ENCODE measurements at regions of chr5 and their contacts with region 1.

Region 1: DNA sequence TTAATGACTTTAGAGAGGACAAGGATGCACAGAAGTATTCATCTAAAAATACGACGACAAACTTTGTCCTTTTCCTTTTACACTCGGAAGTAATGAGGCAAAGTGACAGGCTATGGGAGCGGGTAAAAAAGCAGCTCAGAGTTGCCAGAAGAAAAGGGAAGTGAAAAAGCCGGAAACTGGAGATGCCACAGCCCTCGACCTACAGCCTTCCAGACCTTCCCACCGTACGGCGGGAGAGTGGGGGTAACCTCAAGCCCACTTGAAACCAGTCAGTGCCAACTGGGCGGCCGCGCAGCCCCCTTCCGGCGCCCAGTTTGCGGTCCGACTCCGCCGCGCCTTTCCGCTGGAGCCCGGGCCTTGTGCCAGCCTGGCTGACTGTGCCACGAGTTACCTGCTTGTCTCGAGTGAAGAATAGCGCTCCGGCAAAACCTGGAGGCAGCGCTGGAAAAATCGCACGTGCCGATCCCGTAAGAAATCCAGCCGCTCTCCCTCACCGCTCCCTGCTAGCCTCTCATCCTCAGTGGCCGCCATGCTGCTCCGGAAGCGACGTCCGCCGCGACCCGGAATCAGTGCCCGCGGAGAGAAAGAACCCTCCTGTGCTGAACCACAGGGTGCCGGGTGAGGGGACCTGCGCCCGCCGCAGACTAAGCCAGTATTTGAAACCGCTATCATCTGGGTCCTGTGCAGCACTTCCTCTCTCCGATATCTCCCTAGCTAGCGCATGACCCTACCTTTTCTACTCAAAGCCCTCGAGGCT is at the start of gene PGGT1B:
- DNase-seq: peak; percentile 91
- H3K4me3 Mint-ChIP-seq: peak within 1 kb of the TSS; percentile 96
- H3K27ac Mint-ChIP-seq: peak within 1 kb of the TSS; percentile 88
- H3K4me1 Mint-ChIP-seq: peaks cover 36% of the 10 kb centered on the region
- H3K27me3 Mint-ChIP-seq: no peaks in the 10 kb centered on the region
- total RNA-seq, gene PGGT1B: 37.9 and 42.0 TPM in 2 replicates

Region 2: GRCh38 chr5:114243281-114243988 is 1019.1 kb before region 1 on chr5:
- intact Hi-C with region 1: no loop called
- DNase-seq: no peak
- H3K4me3 Mint-ChIP-seq: no peak overlapping the region
- H3K27ac Mint-ChIP-seq: no peak overlapping the region
- H3K4me1 Mint-ChIP-seq: no peaks in the 10 kb centered on the region
- H3K27me3 Mint-ChIP-seq: no peaks in the 10 kb centered on the region

Region 3: DNA sequence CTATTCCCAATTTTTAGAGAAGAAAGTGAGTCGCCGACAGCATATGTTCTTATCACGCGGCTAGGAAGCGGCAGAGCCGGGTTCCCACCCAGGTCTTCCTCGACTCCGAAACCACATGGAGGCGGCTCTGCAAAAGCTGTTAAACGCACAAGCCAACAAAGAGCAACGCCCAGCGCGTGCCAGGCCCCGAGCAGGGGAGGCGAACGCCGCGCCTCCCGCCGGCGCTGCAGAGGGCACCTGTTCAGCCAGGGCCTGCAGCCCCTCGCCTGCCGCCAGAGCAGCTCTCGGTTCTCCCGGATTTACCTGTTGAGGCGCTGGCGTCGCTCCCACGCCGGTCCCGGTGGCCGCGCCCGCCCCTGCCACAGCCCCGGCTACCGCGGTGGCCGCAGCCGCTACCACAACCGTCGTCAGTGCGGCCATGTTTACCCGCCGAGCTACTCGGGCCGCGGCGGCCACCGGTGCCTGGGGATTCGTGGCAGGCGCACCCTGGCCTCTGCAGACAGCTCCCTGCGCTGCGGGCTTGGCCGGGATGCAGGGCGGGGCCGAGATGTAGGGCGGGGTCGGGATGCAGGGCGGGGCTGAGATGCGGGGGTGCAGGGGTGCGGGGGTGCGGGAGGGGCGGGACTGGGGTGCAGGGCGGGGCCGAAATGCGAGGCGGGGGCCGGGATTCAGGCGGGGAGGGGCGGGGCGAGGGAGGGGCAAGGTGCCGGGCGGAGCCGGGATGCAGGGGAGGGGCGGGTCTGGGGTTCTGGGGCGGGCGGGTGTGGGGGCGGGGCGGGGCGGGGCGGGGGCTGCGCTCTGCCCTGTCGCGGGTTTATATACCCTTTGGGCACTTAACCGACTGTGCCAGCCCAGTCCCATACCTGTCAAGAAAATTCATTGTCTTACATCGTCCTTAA is 33.9 kb after region 1 on chr5 and contains the start of gene CCDC112:
- intact Hi-C with region 1: loop called (anchors 2 kb)
- DNase-seq: peak; percentile 87
- H3K4me3 Mint-ChIP-seq: peak within 1 kb of the TSS; percentile 85
- H3K27ac Mint-ChIP-seq: no peak within 1 kb of the TSS
- H3K4me1 Mint-ChIP-seq: peaks cover 4% of the 10 kb centered on the region
- H3K27me3 Mint-ChIP-seq: peaks cover 59% of the 10 kb centered on the region
- total RNA-seq, gene CCDC112: 0.31 and 0.49 TPM in 2 replicates